Mammary epithelial cell (primary cell): ENCODE measurements at regions of chr6 and their contacts with region 1.

Region 1: DNA sequence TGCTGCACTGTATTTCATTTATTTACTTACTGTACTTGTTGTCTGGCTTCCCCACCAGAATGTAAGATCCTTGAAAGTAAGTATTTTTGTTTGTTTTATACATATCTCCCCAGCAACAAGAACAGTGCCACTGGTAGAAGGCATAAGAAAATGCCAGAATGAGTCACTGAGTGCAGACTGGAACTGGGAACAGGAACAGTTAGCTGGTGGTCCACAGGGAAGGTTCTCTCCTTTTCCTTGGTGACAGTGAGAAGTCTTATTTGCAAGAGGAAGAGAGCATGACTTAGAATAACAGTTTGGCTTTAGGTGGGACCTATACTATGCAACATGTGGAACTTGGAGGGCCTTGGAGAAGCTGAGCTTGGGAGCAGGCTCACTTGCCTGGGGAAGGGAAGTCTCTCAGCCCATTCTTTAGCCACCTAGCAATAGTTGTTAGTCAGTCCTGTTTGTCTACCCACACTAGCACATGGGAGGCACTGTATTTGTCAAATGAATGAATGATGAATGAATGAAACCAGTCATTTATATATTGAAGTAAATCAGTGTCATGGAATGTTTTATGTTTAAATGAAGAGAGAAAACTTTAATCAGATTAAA is 203.5 kb downstream of the KCNQ5 start:
- DNase-seq: peak; percentile 66
- H3K4me3 ChIP-seq: no peak overlapping the region
- H3K27ac ChIP-seq: peak overlapping the region; percentile 89
- H3K4me1 ChIP-seq: peaks cover 47% of the 10 kb centered on the region
- H3K27me3 ChIP-seq: no peaks in the 10 kb centered on the region
- CTCF ChIP-seq: no peak

Region 2: GRCh38 chr6:72787391-72788031 is 37.9 kb before region 1 on chr6:
- CTCF ChIA-PET with region 1: no interaction called
- dilution Hi-C with region 1: no loop called
- in situ Hi-C with region 1: no loop called
- intact Hi-C with region 1: loop called (anchors 5 kb)
- DNase-seq: peak; percentile 94
- H3K4me3 ChIP-seq: peak overlapping the region in 1 of 3 experiments; percentile 17
- H3K27ac ChIP-seq: peak overlapping the region; percentile 99
- H3K4me1 ChIP-seq: peaks cover 47% of the 10 kb centered on the region
- H3K27me3 ChIP-seq: no peaks in the 10 kb centered on the region
- CTCF ChIP-seq: no peak

Region 3: GRCh38 chr6:73145690-73146089 is 320.3 kb after region 1 on chr6:
- CTCF ChIA-PET with region 1: no interaction called
- dilution Hi-C with region 1: no loop called
- in situ Hi-C with region 1: no loop called
- intact Hi-C with region 1: no loop called
- DNase-seq: no peak
- H3K4me3 ChIP-seq: no peak overlapping the region
- H3K27ac ChIP-seq: no peak overlapping the region
- H3K4me1 ChIP-seq: no peaks in the 10 kb centered on the region
- H3K27me3 ChIP-seq: no peaks in the 10 kb centered on the region
- CTCF ChIP-seq: no peak